ENCODE measurements at regions of chr22 and their contacts with region 1.

Region 1: GRCh38 chr22:39003165-39003638 is 10.9 kb upstream of the APOBEC3C start:
- DNase-seq: peak; percentile 66 to 77
- H3K4me3 ChIP-seq: no peak overlapping the region
- H3K27ac ChIP-seq: peak overlapping the region in 1 of 2 donors; percentile 48
- H3K4me1 ChIP-seq: no peaks in the 10 kb centered on the region
- H3K27me3 ChIP-seq: no peaks in the 10 kb centered on the region
- CTCF ChIP-seq: peak; percentile 72 to 82 (median 73)
- POLR2A ChIP-seq: no peak

Region 2: GRCh38 chr22:38782402-38783094 is 220.7 kb before region 1 on chr22:
- intact Hi-C with region 1: no loop called
- DNase-seq: no peak
- H3K4me3 ChIP-seq: no peak overlapping the region
- H3K27ac ChIP-seq: peak overlapping the region in 1 of 2 donors; percentile 48
- H3K4me1 ChIP-seq: no peaks in the 10 kb centered on the region
- H3K27me3 ChIP-seq: no peaks in the 10 kb centered on the region
- CTCF ChIP-seq: no peak
- POLR2A ChIP-seq: no peak

Region 3: GRCh38 chr22:38953577-38954413 is 49.4 kb before region 1 on chr22:
- intact Hi-C with region 1: no loop called
- DNase-seq: peak in 1 of 2 donors; percentile 17
- H3K4me3 ChIP-seq: no peak overlapping the region
- H3K27ac ChIP-seq: no peak overlapping the region
- H3K4me1 ChIP-seq: no peaks in the 10 kb centered on the region
- H3K27me3 ChIP-seq: no peaks in the 10 kb centered on the region
- CTCF ChIP-seq: no peak
- POLR2A ChIP-seq: no peak

Region 4: DNA sequence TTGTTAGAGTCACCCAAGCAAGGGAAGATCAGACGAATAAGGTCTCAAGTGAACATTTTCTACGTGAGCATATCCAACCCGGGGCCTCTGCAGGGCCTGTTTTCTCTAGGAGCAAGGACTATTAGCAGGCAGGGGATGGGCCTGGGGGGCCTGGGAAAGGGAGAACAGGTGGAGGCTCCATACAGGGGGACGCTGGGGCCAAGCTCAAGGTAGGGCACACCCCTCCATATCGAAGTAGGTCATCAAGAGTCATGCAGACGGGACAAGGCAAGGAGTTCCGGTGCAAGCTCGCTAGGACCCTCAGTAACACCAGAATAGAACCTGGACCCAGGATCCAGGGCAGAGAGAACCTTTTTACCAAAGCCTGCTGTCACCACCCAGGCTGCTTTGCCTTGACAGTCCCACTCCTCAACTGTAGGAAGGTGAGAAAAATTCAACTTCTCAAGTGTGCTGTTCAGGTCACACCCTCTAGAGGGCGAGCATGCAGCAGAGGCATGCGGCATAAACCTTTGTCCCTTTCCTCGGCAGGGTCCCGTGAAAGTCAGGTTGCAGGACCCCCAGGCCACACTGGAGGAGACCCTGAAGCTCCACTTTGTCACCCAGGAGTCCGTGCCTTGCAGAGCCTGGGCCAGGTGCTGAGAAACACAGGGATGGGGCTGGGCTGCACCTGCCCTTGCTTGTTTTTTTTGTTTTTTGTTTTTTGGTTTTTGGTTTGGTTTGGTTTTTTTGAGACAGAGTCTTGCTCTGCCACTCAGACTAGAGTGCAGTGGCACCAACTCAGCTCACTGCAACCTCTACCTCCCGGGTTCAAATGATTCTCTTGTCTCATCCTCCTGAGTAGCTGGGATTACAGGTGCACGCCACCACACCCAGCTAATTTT is 29.7 kb before region 1 on chr22:
- intact Hi-C with region 1: no loop called
- DNase-seq: no peak
- H3K4me3 ChIP-seq: no peak overlapping the region
- H3K27ac ChIP-seq: no peak overlapping the region
- H3K4me1 ChIP-seq: no peaks in the 10 kb centered on the region
- H3K27me3 ChIP-seq: no peaks in the 10 kb centered on the region
- CTCF ChIP-seq: peak in 2 of 3 donors; percentile 39 to 68
- POLR2A ChIP-seq: no peak

Region 5: DNA sequence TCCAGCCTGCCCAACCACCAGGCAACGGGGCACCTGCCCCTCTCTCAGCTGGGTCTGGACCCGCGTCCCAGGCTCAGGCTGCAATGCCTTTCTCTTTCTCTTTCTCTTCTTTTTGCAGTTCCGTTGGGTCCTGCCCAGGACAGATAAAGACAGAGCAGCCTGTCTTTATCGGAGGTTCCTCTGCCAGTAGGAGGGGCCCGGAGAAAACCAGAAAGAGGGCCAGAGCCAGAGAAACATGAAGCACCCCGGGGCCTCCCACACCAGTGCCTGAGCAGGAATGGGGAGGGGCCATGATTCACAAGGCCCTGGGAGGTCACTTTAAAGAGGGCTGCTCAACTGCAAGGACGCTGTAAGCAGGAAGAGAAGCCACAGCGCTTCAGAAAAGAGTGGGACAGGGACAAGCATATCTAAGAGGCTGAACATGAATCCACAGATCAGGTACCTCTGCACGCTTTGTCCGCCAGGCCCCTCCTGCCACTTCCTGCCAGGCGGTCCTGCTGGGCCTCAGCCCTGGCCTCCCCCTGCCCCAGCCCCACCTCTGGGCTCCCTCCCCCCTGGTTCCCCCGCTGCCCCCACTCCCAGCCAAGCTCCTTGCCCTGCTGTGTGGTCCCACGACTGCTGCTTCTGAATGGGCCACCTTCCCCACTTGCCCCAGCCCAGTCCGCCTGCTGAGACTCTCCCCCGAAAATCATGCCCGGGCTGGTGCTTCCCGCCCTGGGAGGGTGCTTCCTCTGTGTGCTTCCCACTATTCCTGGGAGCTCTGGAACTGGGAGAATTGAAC is 10.9 kb after region 1 on chr22 and contains the start of gene APOBEC3C:
- intact Hi-C with region 1: no loop called
- DNase-seq: peak; percentile 74
- H3K4me3 ChIP-seq: peak within 1 kb of the TSS; percentile 50 to 79 (median 59)
- H3K27ac ChIP-seq: peak within 1 kb of the TSS; percentile 86 to 97
- H3K4me1 ChIP-seq: no peaks in the 10 kb centered on the region
- H3K27me3 ChIP-seq: no peaks in the 10 kb centered on the region
- CTCF ChIP-seq: no peak
- POLR2A ChIP-seq: peak; percentile 54
- total RNA-seq, gene APOBEC3C: 6.9 to 9.5 (median 7.0) TPM

Region 6: GRCh38 chr22:39080052-39080762 is 77.0 kb after region 1 on chr22:
- intact Hi-C with region 1: loop called (anchors 2 kb)
- DNase-seq: no peak
- H3K4me3 ChIP-seq: no peak overlapping the region
- H3K27ac ChIP-seq: no peak overlapping the region
- H3K4me1 ChIP-seq: no peaks in the 10 kb centered on the region
- H3K27me3 ChIP-seq: no peaks in the 10 kb centered on the region
- CTCF ChIP-seq: no peak
- POLR2A ChIP-seq: no peak

Region 7: DNA sequence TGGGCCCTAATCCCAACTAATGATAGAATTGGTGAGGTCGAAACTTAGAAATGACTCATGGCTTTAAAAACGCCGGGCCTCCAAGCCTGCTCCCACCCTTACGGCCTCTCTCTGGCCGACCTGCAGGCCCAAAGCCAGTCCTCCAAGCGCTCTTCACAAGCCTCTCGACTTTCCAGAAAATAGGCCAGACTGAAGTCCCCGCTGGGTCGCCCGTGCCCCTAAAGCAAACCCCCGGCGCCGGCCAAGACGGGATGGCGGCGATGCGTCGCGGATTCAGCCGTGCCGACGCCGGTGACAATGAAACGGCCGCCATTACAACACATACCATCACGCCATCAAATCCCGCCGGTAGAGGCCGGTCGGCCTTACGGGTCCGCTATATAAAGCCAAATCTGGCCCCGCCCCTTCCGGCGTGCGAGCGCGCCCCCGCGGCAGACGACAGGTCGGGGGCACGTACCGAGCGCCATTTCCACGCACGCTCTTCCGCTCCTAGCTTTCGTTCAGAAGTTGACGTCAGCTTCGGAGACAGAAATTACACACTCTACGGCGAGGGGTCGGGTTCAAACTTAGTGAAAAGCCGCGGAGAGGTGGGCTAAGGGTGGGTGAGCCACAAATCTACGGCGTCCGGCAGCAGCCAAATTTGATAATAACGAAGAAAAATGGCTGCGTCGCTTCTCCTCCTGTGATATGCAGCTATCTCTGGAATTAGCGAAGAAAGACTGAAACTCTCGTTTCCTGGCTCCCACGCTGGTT is 316.2 kb after region 1 on chr22 and contains the start of gene RPL3:
- intact Hi-C with region 1: loop called (anchors 10 kb)
- DNase-seq: peak; percentile 95 to 96
- H3K4me3 ChIP-seq: peak within 1 kb of the TSS; percentile 81 to 83 (median 81)
- H3K27ac ChIP-seq: peak within 1 kb of the TSS; percentile 95 to 98
- H3K4me1 ChIP-seq: peaks cover 15 to 21% of the 10 kb centered on the region in 2 donors
- H3K27me3 ChIP-seq: no peaks in the 10 kb centered on the region
- CTCF ChIP-seq: peak; percentile 28 to 48 (median 46)
- POLR2A ChIP-seq: peak; percentile 97
- total RNA-seq, gene RPL3: 1,827 to 3,262 (median 2,633) TPM